IMR-90 (cell line): ENCODE measurements at regions of chr16 and their contacts with region 1.

Region 1: GRCh38 chr16:57519796-57520360 is 16.5 kb downstream of the CCDC102A start:
- DNase-seq: peak; percentile 52
- ATAC-seq: peak; percentile 96
- H3K4me3 ChIP-seq: no peak overlapping the region
- H3K27ac ChIP-seq: no peak overlapping the region
- H3K4me1 ChIP-seq: no peaks in the 10 kb centered on the region; the same call in 1 of the 2 replicates
- H3K27me3 ChIP-seq: no peaks in the 10 kb centered on the region
- CTCF ChIP-seq: peak; percentile 90
- POLR2A ChIP-seq: no peak
- RAD21 ChIP-seq: peak; percentile 88

Region 2: GRCh38 chr16:56814537-56815432 is 705.1 kb before region 1 on chr16:
- CTCF ChIA-PET with region 1: no interaction called
- POLR2A ChIA-PET with region 1: no interaction called
- dilution Hi-C with region 1: no loop called
- in situ Hi-C with region 1: no loop called
- intact Hi-C with region 1: no loop called
- DNase-seq: no peak
- ATAC-seq: peak; percentile 62; the same call in 1 of the 2 replicates
- H3K4me3 ChIP-seq: no peak overlapping the region
- H3K27ac ChIP-seq: 0 out of 2 replicates have a peak overlapping the region, but pooled peaks have one; percentile 10
- H3K4me1 ChIP-seq: peaks cover 23% of the 10 kb centered on the region
- H3K27me3 ChIP-seq: no peaks in the 10 kb centered on the region
- CTCF ChIP-seq: no peak
- POLR2A ChIP-seq: no peak
- RAD21 ChIP-seq: no peak

Region 3: DNA sequence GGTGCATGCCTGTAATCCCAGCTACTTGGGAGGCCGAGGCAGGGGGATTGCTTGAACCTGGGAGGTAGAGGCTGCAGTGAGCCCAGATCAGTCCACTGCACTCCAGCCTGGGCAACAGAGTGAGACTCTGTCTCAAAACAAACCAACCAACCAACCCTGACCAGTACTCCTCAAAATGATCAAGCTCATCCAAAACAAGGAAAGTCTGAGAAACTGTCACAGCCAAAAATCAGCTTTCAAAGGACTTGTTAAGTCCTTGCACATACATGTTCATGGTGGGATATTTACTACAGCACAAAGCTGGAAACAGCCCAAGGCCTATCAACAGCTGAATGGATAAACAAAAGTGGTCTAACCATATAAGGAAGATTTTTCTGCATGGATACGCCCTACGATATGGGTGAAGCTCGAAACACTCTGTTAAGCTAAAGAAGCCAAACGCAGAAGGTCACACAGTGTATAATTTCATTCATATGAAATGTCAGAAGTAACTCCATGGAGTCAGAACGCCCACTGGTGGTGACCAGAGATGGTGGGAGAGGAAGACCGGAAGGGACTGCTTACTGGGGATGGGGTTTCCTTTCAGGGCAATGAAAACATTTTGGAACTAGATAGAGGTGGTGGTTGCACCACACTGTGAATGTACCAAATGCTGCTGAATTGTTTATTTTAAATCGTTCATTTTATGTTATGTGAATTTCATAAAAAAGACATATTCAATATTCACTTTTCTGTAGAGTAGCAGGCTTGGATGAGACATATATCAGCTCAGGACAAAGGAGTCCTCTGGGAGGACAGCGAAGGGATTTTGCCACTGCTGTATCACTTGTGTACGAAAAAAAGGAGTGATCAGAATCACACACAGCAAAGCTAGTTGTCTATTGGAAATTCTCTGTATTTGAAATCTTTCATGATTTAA is 97.6 kb before region 1 on chr16:
- CTCF ChIA-PET with region 1: interaction called, 4 read pairs
- POLR2A ChIA-PET with region 1: no interaction called
- dilution Hi-C with region 1: no loop called
- in situ Hi-C with region 1: no loop called
- intact Hi-C with region 1: loop called (anchors 1 kb)
- DNase-seq: peak; percentile 72
- ATAC-seq: peak; percentile 91
- H3K4me3 ChIP-seq: no peak overlapping the region
- H3K27ac ChIP-seq: no peak overlapping the region
- H3K4me1 ChIP-seq: peaks cover 2% of the 10 kb centered on the region
- H3K27me3 ChIP-seq: no peaks in the 10 kb centered on the region
- CTCF ChIP-seq: peak; percentile 83
- POLR2A ChIP-seq: no peak
- RAD21 ChIP-seq: peak; percentile 83

Region 4: GRCh38 chr16:57462209-57462977 is 57.5 kb before region 1 on chr16 and contains the start of gene POLR2C:
- CTCF ChIA-PET with region 1: interaction called, 4 read pairs
- POLR2A ChIA-PET with region 1: no interaction called
- dilution Hi-C with region 1: no loop called
- in situ Hi-C with region 1: no loop called
- intact Hi-C with region 1: loop called (anchors 1 kb)
- DNase-seq: peak; percentile 81
- ATAC-seq: peak; percentile 97
- H3K4me3 ChIP-seq: peak within 1 kb of the TSS; percentile 81
- H3K27ac ChIP-seq: peak within 1 kb of the TSS; percentile 95
- H3K4me1 ChIP-seq: peaks cover 4% of the 10 kb centered on the region
- H3K27me3 ChIP-seq: no peaks in the 10 kb centered on the region
- CTCF ChIP-seq: peak; percentile 97
- POLR2A ChIP-seq: peak; percentile 98
- RAD21 ChIP-seq: peak; percentile 42
- total RNA-seq, gene POLR2C: 188 and 340 TPM in 2 replicates

Region 5: GRCh38 chr16:57628008-57628781 is 108.3 kb after region 1 on chr16 and contains the start of gene ADGRG1:
- CTCF ChIA-PET with region 1: no interaction called
- POLR2A ChIA-PET with region 1: no interaction called
- dilution Hi-C with region 1: no loop called
- in situ Hi-C with region 1: no loop called
- intact Hi-C with region 1: no loop called
- DNase-seq: peak; percentile 97
- ATAC-seq: peak; percentile 92
- H3K4me3 ChIP-seq: peak within 1 kb of the TSS; percentile 20; the same call in 1 of the 2 replicates
- H3K27ac ChIP-seq: peak within 1 kb of the TSS; percentile 58
- H3K4me1 ChIP-seq: peaks cover 25% of the 10 kb centered on the region
- H3K27me3 ChIP-seq: no peaks in the 10 kb centered on the region
- CTCF ChIP-seq: 0 out of 2 replicates have a peak, but pooled peaks have one; percentile 27
- POLR2A ChIP-seq: peak; percentile 47; the same call in 1 of the 2 replicates
- RAD21 ChIP-seq: no peak
- total RNA-seq, gene ADGRG1: 0.83 and 0.90 TPM in 2 replicates